HEK293T (cell line): ENCODE measurements at regions of chr1 and their contacts with region 1.

Region 1: DNA sequence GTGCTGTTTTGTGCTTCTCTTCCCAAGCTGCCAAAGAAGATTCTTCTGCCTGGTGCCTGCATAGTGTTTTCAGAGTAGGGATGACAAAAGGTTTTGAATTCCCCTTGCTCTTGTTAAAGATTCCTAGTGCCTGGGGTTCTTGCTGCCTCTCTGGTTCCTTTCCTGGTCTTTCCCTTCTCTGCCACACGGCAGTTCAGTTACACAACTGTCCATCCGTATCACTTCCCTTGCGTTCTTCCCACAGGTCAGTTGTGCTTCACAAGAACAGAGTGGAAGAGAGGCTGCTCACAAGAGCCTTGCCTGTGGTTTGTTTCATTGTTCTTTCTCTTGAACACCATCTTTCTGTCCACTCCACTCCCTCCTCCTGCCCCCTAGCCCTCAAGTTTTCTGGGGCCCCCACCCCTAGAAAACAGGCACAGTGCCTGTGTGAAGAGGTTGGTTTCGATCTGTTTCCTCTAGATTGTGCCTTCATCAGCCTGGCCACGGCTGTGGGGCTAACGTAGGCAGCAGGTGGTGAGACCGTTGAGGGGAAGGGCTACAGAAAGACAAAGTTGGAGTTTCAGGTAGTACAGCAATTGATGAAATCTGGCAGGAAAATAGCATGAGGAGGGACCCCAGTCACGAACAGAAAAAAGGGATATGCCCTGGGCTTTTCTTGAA is 5.8 kb downstream of the VASH2 start:
- DNase-seq: no peak

Region 2: DNA sequence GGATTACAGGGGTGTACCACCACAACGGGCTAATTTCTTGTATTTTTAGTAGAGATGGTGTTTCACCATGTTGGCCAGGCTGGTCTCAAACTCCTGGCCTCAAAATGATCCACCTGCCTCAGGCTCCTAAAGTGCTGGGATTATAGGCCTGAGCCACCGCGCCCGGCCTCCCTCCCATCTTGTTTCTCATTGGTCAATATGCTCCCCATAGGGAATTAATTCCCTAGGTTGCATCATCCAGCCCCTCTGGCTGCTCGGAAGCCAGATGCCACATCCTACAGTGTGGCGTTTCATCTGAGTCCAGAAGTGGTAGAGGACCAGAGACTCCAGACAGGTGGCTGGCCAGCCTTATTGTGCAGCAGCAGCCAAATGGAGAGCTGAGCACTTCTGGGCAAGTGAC is 17.2 kb before region 1 on chr1:
- CTCF ChIA-PET with region 1: no interaction called
- POLR2A ChIA-PET with region 1: no interaction called
- DNase-seq: no peak

Region 3: GRCh38 chr1:212967801-212968200 is 11.7 kb after region 1 on chr1:
- CTCF ChIA-PET with region 1: interaction called, 10 read pairs
- POLR2A ChIA-PET with region 1: no interaction called
- DNase-seq: peak; percentile 76